ENCODE measurements at regions of chr5 and their contacts with region 1.

Region 1: GRCh38 chr5:7868773-7869473 is at the starts of genes FASTKD3 and MTRR:
- DNase-seq: peak; percentile 95
- ATAC-seq: peak; percentile 99
- H3K4me3 Mint-ChIP-seq: peak within 1 kb of the TSS; percentile 95
- H3K27ac Mint-ChIP-seq: peak within 1 kb of the TSS; percentile 91
- H3K4me1 Mint-ChIP-seq: peaks cover 71% of the 10 kb centered on the region
- H3K27me3 Mint-ChIP-seq: no peaks in the 10 kb centered on the region
- CTCF ChIP-seq: no peak
- total RNA-seq, gene FASTKD3: 10.6 to 10.7 TPM
- total RNA-seq, gene MTRR: 54.3 to 57.8 TPM

Region 2: DNA sequence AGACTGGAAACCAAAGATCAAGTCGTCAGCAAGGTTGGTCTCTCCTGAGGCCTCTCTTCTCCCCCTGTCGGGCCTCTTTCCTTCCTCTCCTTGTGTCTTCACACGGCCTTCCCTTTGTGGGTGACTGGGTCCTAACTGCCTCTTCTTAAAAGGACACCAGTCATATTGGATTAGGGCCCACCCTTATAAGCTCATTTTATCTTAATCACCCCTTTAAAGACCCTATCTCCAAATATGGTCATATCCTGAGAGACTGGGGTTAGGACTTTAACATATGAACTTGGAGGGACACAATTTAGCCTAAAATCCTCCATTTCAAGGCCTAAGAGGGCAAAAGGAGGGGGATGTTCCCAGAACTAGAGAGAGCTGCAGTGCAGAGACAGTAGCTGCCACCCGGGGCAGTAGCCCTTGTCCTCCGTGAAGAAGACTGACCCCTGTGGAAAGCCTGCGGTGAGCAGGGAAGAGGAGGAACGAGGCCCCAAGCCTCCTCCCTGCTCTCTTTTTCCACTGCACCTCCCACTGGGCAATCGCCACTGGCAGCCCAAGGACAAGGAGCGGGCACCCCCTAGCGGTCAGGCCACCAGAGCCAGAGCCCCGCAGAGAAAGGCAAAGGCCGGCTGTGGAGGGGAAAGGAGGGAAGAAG is 52.9 kb before region 1 on chr5:
- CTCF ChIA-PET with region 1: no interaction called
- POLR2A ChIA-PET with region 1: no interaction called
- intact Hi-C with region 1: no loop called
- DNase-seq: peak; percentile 76
- ATAC-seq: peak; percentile 84
- H3K4me3 Mint-ChIP-seq: no peak overlapping the region
- H3K27ac Mint-ChIP-seq: no peak overlapping the region
- H3K4me1 Mint-ChIP-seq: no peaks in the 10 kb centered on the region
- H3K27me3 Mint-ChIP-seq: peaks cover 29% of the 10 kb centered on the region
- CTCF ChIP-seq: peak; percentile 72

Region 3: DNA sequence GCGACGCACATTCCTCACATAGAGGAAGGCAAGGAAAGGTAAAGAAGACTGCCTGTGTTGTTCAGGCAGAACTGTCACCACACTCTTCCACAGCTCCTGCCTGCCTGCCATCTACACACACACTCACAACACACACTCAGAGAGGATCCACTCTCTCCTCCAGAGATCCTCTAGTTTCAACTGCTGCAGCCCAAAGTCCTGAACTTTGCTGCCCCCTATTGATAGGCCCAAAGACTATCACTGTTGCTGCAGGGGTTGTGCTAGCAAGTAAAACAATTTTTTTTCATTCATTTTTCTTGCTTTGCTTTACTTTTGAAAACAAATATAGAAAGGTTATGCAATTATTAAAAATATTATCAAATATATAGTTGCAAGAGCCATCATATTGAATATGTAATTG is 12.1 kb before region 1 on chr5:
- CTCF ChIA-PET with region 1: interaction called, 26 read pairs
- POLR2A ChIA-PET with region 1: interaction called, 6 read pairs
- intact Hi-C with region 1: no loop called
- DNase-seq: peak; percentile 24
- ATAC-seq: peak; percentile 64
- H3K4me3 Mint-ChIP-seq: no peak overlapping the region
- H3K27ac Mint-ChIP-seq: no peak overlapping the region
- H3K4me1 Mint-ChIP-seq: peaks cover 21% of the 10 kb centered on the region
- H3K27me3 Mint-ChIP-seq: no peaks in the 10 kb centered on the region
- CTCF ChIP-seq: peak; percentile 67

Region 4: GRCh38 chr5:7886849-7887475 is 18.0 kb after region 1 on chr5:
- CTCF ChIA-PET with region 1: interaction called, 24 read pairs
- POLR2A ChIA-PET with region 1: interaction called, 6 read pairs
- intact Hi-C with region 1: no loop called
- DNase-seq: no peak
- ATAC-seq: no peak
- H3K4me3 Mint-ChIP-seq: no peak overlapping the region
- H3K27ac Mint-ChIP-seq: no peak overlapping the region
- H3K4me1 Mint-ChIP-seq: peaks cover 3% of the 10 kb centered on the region
- H3K27me3 Mint-ChIP-seq: no peaks in the 10 kb centered on the region
- CTCF ChIP-seq: peak; percentile 38